Activated T-helper 1 cell treated with anti-CD3 and anti-CD28 coated beads, Interleukin-12 subunit alpha, Interleukin-12 subunit beta, Interleukin-2, Interleukin-4 antibody, amounts not matched to agents 30 ng/mL and 10 ng/mL and 1 ng/mL, durations not matched to agents 14 hours and 24 hours and 36 hours (primary cell): ENCODE measurements at regions of chr10 and their contacts with region 1.

Region 1: GRCh38 chr10:91493313-91493712 is 83.2 kb downstream of the HECTD2 start:
- DNase-seq: no peak
- H3K4me3 Mint-ChIP-seq: no peak overlapping the region
- H3K27ac Mint-ChIP-seq: no peak overlapping the region
- H3K4me1 Mint-ChIP-seq: no peaks in the 10 kb centered on the region
- H3K27me3 Mint-ChIP-seq: no peaks in the 10 kb centered on the region

Region 2: DNA sequence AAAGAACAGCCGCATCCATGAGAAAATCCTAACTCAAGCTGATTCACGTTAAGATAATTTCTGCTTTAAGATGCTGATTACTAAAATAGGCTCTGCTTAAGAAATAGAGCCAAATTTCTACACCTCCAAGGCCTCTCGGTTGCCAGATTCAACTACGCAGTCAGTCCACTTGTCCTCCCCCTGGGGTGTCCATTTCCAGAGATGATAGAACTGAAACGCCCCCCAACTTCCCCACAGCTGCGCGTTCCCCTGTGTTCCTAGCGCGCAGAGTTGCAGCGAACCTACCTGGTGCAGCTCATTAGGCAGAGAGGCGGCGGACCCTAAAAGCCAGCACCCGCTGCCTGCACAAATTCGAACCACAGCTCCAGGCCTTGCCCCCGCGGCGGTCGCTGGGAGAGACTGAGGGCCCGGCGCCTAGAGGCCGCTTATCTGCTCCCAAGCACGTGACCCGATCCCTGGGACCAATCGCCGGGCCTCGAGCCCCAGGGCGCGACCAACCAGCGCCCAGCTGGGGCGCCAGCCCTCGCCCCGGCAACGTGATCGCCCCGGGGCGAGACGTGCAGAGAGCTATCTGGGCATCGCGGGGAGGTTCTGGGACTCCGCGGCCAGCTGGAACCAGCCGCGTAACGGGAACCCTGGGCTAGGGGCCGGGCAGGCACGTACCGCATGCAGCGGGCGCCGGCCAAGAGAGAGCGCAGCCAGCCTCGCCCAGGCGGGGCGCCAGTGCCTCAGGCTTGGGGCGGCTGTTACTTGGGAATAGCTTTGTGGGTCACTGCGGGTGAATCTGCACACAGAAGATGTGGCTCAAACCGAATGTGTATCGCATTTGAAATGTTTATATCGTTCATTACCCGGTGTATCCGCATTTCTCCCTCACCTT is 139.6 kb after region 1 on chr10 and contains the start of gene PPP1R3C:
- intact Hi-C with region 1: loop called (anchors 5 kb)
- DNase-seq: peak; percentile 46
- H3K4me3 Mint-ChIP-seq: peak within 1 kb of the TSS; percentile 73
- H3K27ac Mint-ChIP-seq: no peak within 1 kb of the TSS
- H3K4me1 Mint-ChIP-seq: no peaks in the 10 kb centered on the region
- H3K27me3 Mint-ChIP-seq: peaks cover 49% of the 10 kb centered on the region
- total RNA-seq, gene PPP1R3C: not detected in 2 replicates